BJ (cell line): ENCODE measurements at regions of chr12 and their contacts with region 1.

Region 1: GRCh38 chr12:57069523-57069922 is 9.1 kb downstream of the NEMP1 start:
- DNase-seq: no peak
- H3K4me3 ChIP-seq: no peak overlapping the region
- H3K27me3 ChIP-seq: no peaks in the 10 kb centered on the region
- CTCF ChIP-seq: peak; percentile 83

Region 2: GRCh38 chr12:56987551-56988053 is 81.9 kb before region 1 on chr12:
- CTCF ChIA-PET with region 1: no interaction called
- POLR2A ChIA-PET with region 1: no interaction called
- DNase-seq: no peak
- H3K4me3 ChIP-seq: no peak overlapping the region
- H3K27me3 ChIP-seq: no peaks in the 10 kb centered on the region
- CTCF ChIP-seq: peak; percentile 97

Region 3: GRCh38 chr12:57088459-57089248 is 19.1 kb after region 1 on chr12 and contains the start of gene NAB2:
- CTCF ChIA-PET with region 1: interaction called, 43 read pairs
- POLR2A ChIA-PET with region 1: interaction called, 19 read pairs
- DNase-seq: peak; percentile 80
- H3K4me3 ChIP-seq: peak within 1 kb of the TSS; percentile 96
- H3K27me3 ChIP-seq: no peaks in the 10 kb centered on the region
- CTCF ChIP-seq: no peak
- polyA plus RNA-seq, gene NAB2: 41.7 and 50.2 TPM in 2 replicates

Region 4: DNA sequence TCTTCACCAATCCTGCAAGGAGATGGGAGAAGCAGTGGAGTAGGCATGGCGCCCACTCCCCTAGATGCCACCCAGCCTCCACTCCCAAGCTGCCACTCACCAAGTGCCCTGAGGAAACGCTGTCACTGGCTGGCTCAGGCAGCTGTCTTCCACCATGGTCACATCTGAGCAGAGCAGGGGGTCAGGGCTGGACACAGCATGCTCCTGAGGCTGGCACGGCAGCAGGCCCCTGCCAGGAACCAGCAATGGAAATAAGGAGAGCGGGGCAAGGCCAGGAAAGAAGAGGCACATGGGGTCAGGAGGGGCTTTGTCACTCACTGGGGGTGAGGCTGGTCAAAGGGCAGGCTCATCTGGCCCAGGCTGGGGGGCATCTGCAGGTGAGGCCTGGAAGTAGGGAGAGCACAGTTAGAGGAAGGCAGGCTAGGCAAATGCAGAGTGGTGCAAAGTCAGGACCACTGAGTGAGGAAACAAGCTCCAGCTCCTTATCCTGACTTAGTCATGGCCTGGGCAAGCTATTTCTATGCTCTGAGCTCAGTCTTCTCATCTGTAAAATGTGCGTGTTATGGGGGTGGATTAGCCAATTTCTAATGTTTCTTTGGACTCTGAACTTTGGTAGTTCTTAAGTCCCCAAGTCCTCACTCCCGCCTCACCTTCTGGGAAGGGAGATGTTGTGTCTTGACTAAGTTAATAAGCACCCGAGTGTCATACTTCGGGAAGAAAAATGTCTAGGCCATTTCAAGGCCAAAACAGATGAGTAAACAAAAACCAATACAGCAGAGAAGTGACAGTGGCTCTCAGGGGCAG is 27.4 kb after region 1 on chr12:
- CTCF ChIA-PET with region 1: interaction called, 43 read pairs
- POLR2A ChIA-PET with region 1: interaction called, 19 read pairs
- DNase-seq: no peak
- H3K4me3 ChIP-seq: no peak overlapping the region
- H3K27me3 ChIP-seq: no peaks in the 10 kb centered on the region
- CTCF ChIP-seq: no peak

Region 5: GRCh38 chr12:57116580-57117281 is 47.2 kb after region 1 on chr12:
- CTCF ChIA-PET with region 1: interaction called, 199 read pairs
- POLR2A ChIA-PET with region 1: interaction called, 8 read pairs
- DNase-seq: no peak
- H3K4me3 ChIP-seq: no peak overlapping the region
- H3K27me3 ChIP-seq: no peaks in the 10 kb centered on the region
- CTCF ChIP-seq: no peak

Region 6: GRCh38 chr12:57124259-57124877 is 54.8 kb after region 1 on chr12:
- CTCF ChIA-PET with region 1: interaction called, 15 read pairs
- POLR2A ChIA-PET with region 1: interaction called, 18 read pairs
- DNase-seq: no peak
- H3K4me3 ChIP-seq: no peak overlapping the region
- H3K27me3 ChIP-seq: no peaks in the 10 kb centered on the region
- CTCF ChIP-seq: peak; percentile 97

Region 7: GRCh38 chr12:57135527-57136326 is 66.2 kb after region 1 on chr12:
- CTCF ChIA-PET with region 1: interaction called, 5 read pairs
- POLR2A ChIA-PET with region 1: interaction called, 11 read pairs
- DNase-seq: no peak
- H3K4me3 ChIP-seq: peak overlapping the region; percentile 33
- H3K27me3 ChIP-seq: no peaks in the 10 kb centered on the region
- CTCF ChIP-seq: no peak

Region 8: DNA sequence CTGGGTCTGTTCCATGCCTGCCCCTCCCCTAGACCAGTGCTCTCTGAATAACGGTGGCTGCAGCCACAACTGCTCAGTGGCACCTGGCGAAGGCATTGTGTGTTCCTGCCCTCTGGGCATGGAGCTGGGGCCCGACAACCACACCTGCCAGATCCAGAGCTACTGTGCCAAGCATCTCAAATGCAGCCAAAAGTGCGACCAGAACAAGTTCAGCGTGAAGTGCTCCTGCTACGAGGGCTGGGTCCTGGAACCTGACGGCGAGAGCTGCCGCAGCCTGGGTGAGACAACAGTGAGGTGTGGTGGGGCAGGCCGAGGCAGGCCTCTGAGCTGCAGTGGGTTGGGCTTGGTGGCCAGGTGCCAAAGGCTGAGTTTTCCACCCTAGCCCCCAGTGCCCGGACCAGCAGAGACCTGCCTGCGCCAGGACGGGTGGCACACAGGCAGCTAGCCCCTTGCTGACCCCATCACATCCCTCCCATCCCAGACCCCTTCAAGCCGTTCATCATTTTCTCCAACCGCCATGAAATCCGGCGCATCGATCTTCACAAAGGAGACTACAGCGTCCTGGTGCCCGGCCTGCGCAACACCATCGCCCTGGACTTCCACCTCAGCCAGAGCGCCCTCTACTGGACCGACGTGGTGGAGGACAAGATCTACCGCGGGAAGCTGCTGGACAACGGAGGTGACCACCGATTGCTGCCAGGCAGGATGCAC is 106.1 kb after region 1 on chr12:
- CTCF ChIA-PET with region 1: interaction called, 16 read pairs
- POLR2A ChIA-PET with region 1: interaction called, 5 read pairs
- DNase-seq: no peak
- H3K4me3 ChIP-seq: no peak overlapping the region
- H3K27me3 ChIP-seq: no peaks in the 10 kb centered on the region
- CTCF ChIP-seq: peak; percentile 89